Stomach (tissue), 19 donors: ENCODE measurements at regions of chr5 and their contacts with region 1.

Region 1: DNA sequence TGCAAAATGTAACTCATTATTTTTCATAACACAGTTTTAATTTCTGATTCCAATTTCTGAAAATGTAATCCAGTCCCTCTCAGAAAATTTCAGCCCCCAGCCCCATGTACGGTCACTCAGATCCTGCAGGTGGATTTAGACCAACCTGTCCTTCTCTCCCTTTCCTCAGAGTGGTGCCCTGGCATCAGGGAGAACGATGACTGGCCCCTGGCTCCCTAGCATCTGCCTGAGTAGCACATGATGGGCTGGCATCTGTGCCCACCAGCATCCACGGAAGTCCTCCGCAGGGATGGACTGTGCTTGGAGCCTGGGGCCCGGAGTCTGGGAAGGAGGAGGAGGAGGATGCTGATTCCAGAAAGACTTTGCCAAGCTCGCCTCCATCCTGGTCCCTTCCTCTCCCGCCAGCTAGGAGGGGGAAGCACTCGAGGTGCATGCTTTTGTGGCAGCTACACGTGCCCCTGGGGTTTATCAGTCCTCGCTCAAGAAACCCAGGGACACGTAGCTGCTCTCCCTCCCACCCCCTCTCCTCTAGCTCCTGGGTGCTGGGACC is 54.4 kb upstream of the RUFY1 start:
- DNase-seq: no peak
- H3K4me3 ChIP-seq: no peak overlapping the region
- H3K27ac ChIP-seq: no peak overlapping the region
- H3K4me1 ChIP-seq: no peaks in the 10 kb centered on the region
- H3K27me3 ChIP-seq: peaks cover 0 to 42% (median 4%) of the 10 kb centered on the region in 3 donors
- CTCF ChIP-seq: no peak
- EP300 ChIP-seq: no peak
- POLR2A ChIP-seq: no peak

Region 2: DNA sequence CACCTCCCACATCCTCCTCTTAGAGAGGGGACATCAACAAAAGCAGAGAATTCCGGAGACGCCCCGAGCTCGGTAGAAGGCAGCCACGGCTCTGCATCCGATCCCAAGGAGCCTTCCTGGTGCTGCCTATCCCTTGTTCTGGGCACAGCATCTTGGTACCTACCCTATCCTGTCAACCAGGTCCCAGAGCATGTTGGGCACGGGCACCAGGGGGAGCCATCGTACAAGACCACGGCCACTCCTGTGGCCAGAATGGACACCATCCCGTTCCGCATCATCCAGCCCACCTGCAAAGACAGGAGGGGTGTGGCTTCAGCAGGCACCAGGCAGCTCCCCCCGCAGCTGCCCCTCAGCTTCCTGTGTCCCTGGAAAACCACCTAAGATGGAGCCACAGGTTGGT is 702.8 kb before region 1 on chr5:
- intact Hi-C with region 1: loop called (anchors 10 kb)
- DNase-seq: peak; percentile 52 to 58
- H3K4me3 ChIP-seq: no peak overlapping the region
- H3K27ac ChIP-seq: no peak overlapping the region
- H3K4me1 ChIP-seq: no peaks in the 10 kb centered on the region
- H3K27me3 ChIP-seq: peaks cover 0 to 11% (median 0%) of the 10 kb centered on the region in 3 donors
- CTCF ChIP-seq: peak in 3 of 7 experiments; percentile 8 to 31 (median 20)
- EP300 ChIP-seq: no peak
- POLR2A ChIP-seq: no peak

Region 3: DNA sequence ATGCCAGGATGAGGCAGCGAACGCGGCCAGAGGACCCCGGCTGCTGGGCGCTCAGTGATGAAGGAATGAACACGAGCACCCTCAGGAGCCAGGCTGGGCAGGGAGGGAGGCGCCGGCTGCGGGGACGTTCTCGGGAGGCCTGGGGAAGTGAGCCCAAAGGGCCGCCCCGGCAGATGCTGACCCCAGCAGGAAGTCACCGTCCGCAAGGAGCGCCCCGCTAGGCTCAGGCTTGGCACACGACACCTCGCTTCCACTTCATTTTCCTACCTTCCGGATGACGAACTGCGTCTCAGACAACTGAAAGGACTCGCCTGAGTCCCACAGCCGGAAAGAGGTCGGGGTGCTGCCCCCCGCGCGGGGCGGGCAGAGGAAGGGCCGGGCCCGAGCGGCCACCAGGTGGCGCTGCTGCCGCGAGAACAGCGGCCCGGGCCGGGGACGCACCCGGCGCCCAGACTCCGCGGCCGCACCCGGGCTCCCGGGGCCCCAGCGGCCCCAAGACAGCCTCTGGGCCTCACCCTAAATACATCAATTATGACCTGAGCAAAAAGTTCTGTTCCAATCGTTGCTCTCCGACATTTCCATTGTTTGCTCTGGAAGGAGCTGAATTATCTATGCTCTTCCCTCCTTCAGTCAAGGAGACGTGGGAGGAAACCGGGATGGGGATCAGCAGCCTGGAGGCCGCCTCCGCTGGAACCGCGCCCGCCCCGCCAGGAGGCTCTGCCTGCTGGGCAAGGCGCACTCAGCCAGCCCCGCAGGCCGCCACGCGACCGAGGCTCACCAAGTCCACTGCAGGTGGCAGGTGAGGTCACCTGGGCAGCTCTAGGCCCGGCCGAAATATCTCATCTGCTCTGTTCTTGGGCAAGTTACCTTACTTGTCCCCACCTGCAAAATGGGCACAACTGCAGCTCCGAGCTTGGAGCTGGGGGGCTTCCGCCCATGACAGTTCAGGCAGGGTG is 328.8 kb before region 1 on chr5:
- intact Hi-C with region 1: loop called (anchors 5 kb)
- DNase-seq: peak; percentile 39 to 84
- H3K4me3 ChIP-seq: peak overlapping the region; percentile 21 to 37 (median 26)
- H3K27ac ChIP-seq: peak overlapping the region in 1 of 5 donors; percentile 7
- H3K4me1 ChIP-seq: peaks cover 9 to 13% (median 11%) of the 10 kb centered on the region in 4 donors
- H3K27me3 ChIP-seq: peaks cover 0 to 28% (median 17%) of the 10 kb centered on the region in 3 donors
- CTCF ChIP-seq: peak in 5 of 7 experiments; percentile 31 to 93 (median 88)
- EP300 ChIP-seq: no peak
- POLR2A ChIP-seq: no peak